ENCODE measurements at regions of chr22 and their contacts with region 1.

Region 1: GRCh38 chr22:41697126-41697775 is 2.1 kb upstream of the MEI1 start:
- DNase-seq: peak; percentile 88
- CTCF ChIP-seq: peak; percentile 97

Region 2: GRCh38 chr22:41117127-41117965 is 579.9 kb before region 1 on chr22:
- CTCF ChIA-PET with region 1: no interaction called
- POLR2A ChIA-PET with region 1: no interaction called
- DNase-seq: no peak
- CTCF ChIP-seq: no peak

Region 3: DNA sequence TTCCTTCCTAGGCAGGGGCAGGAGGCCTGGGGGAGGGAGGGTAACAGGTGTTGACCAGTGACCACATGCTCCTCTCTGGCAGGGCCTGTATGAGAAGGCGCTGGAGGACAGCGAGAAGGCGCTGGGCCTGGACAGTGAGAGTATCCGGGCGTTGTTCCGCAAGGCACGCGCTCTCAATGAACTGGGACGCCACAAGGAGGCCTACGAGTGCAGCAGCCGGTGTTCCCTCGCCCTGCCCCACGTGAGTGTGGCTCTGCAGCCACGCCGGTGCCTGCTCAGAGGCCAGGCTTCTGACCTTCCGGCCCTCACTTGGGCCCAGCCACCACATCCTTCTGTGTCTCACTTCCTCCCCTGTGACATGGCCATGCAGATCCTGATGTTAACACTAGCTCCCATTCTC is 370.1 kb before region 1 on chr22:
- CTCF ChIA-PET with region 1: no interaction called
- POLR2A ChIA-PET with region 1: no interaction called
- DNase-seq: no peak
- CTCF ChIP-seq: no peak

Region 4: DNA sequence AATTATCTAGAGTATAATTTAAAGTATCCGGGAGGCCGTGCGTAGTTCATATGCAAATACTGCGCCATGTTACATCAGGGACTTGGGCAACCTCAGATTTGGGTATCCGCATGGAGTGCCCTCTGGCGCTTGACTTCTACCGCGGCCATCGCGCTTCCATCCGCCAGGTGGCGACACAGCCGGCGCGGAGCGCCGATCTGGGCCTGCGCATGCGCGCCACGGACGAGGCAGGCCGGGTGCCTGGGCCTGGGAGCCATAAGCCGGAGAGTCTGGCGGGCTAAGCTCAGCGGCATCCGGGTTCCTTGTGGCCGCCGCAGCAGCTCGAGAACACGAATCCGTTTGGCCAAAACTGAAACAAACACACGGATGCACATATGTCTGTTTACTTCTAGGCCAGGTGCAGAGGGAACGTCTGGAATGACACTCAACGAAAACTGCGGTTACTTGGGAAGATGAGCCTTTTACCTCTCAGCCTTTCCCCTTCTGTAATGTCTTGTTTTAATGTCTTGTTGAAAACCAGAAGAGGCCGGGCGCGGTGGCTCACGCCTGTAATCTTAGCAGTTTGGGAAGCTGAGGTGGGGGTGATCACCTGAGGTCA is 30.5 kb before region 1 on chr22:
- CTCF ChIA-PET with region 1: interaction called, 28 read pairs
- POLR2A ChIA-PET with region 1: no interaction called
- DNase-seq: peak; percentile 99
- CTCF ChIP-seq: peak; percentile 99

Region 5: DNA sequence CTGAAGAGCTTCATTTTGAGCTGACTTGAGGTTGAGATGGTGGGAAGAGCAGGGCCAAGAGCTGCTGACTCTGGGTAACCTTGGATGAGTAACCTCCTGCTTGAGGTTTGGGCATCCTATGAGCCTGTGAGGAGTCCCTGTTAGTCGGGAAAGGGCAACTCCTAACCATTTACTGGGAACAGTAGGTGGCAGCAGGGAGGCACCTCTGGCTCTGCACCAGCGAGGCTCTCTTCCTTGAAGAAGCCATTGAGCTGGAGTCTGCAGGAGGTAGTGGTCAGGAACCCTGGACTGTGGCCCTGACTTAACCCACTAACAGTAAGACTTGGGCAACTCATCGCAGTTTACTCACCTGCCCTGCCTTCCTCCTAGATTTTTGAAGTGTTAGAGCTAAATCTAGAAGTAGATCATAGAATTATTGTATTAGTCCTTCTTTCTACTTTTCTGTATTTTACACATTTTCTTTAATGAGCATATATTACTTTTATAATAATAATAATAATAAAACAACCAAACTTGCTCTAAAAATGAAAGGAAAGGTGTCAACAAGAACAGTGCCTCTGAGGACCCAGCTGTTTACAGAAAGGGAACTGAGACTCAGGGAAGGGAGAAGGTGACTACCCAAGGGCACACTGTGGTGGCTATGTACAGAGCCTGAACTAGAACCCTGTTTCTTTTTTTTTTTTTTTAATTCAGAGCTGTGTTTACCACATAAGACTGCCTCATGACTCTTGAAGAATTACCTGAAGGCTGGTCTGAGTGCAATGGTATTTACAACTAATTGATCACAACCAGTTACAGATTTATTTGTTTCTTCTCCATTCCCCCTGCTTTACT is 49.5 kb after region 1 on chr22:
- CTCF ChIA-PET with region 1: interaction called, 26 read pairs
- POLR2A ChIA-PET with region 1: no interaction called
- DNase-seq: peak; percentile 69
- CTCF ChIP-seq: peak; percentile 79

Region 6: DNA sequence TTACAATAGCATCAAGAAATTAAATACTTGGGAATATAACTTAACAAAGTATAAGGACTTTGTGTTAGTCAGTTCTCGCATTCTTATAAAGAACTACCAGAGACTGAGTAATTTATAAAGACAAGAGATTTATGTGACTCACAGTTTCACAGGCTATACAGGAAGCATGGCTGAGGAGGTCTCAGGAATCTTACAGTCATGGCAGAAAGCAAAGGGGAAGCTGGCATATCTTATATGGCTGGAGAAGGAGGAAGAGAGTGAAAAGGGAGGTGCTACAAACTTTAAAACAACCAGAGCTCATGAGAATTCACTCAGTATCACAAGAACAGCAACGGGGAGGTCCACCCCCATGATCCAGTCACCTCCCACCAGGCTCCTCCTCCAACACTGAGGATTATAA is 71.2 kb after region 1 on chr22:
- CTCF ChIA-PET with region 1: interaction called, 15 read pairs
- POLR2A ChIA-PET with region 1: no interaction called
- DNase-seq: no peak
- CTCF ChIP-seq: no peak

Region 7: DNA sequence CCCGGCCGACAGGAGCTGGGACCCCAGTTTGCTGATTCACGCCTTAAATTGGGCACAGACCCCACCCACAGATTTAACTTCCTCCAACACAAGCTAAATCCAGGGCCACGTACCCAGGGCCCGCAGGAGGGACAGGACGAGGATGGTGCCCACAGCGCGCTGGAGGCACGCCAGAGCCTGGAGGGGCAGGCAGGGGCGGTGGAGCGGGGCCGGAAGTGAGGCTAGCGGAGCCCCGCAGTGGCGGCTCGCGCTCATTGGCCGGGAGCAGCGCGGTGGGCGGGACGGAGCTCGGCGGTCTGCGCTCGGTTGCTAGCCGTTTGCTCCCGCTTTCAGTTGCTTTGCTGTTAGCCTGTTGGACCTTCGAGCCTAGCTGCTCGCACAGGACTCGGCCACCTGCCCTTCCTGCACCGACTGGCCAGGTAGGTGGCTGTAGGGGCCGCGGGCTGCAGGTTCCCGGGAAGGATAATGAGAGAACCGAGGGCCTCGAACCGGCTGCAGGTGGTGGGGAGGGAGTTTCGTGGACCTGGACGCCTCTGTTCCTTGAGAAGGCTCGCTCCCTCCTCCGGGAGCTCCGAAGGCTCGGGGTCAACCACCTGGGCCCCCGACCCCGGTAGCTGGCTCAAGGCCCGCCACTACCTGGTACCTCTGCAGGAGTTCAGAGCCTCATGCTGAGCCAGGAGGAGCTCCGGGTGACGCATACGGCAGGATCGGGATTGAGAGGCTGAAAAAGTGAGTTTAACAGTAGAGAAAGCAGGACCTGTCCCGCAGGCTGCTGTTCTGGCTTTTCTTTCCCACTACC is 103.3 kb after region 1 on chr22 and contains the start of gene CCDC134:
- CTCF ChIA-PET with region 1: interaction called, 22 read pairs
- POLR2A ChIA-PET with region 1: interaction called, 6 read pairs
- DNase-seq: peak; percentile 97
- CTCF ChIP-seq: no peak

Region 8: GRCh38 chr22:41940832-41941765 is 243.8 kb after region 1 on chr22:
- CTCF ChIA-PET with region 1: interaction called, 81 read pairs
- POLR2A ChIA-PET with region 1: interaction called, 6 read pairs
- DNase-seq: peak; percentile 72
- CTCF ChIP-seq: peak; percentile 86

Region 9: GRCh38 chr22:41957941-41958556 is 260.8 kb after region 1 on chr22:
- CTCF ChIA-PET with region 1: interaction called, 53 read pairs
- POLR2A ChIA-PET with region 1: no interaction called
- DNase-seq: no peak
- CTCF ChIP-seq: no peak

Measured in GM10248 (cell line).